ENCODE measurements at regions of chr14 and their contacts with region 1.

Region 1: GRCh38 chr14:106129274-106129673 is 602.9 kb downstream of the TMEM121 start:
- DNase-seq: peak in 6 of 14 experiments; percentile 22 to 79 (median 48)
- ATAC-seq: no peak
- H3K4me3 ChIP-seq: no peak overlapping the region
- H3K4me3 Mint-ChIP-seq: no peak overlapping the region
- H3K27ac ChIP-seq: no peak overlapping the region
- H3K27ac Mint-ChIP-seq: no peak overlapping the region
- H3K4me1 ChIP-seq: peaks cover 20% of the 10 kb centered on the region
- H3K4me1 Mint-ChIP-seq: peaks cover 29% of the 10 kb centered on the region
- H3K27me3 ChIP-seq: no peaks in the 10 kb centered on the region
- H3K27me3 Mint-ChIP-seq: no peaks in the 10 kb centered on the region
- CTCF ChIP-seq: peak; percentile 29

Region 2: GRCh38 chr14:106141242-106142220 is 12.3 kb after region 1 on chr14:
- CTCF ChIA-PET with region 1: interaction called, 20 read pairs
- POLR2A ChIA-PET with region 1: no interaction called
- intact Hi-C with region 1: no loop called
- DNase-seq: peak in 11 of 14 experiments; percentile 16 to 76 (median 33)
- ATAC-seq: peak; percentile 34
- H3K4me3 ChIP-seq: no peak overlapping the region
- H3K4me3 Mint-ChIP-seq: no peak overlapping the region
- H3K27ac ChIP-seq: no peak overlapping the region
- H3K27ac Mint-ChIP-seq: peak overlapping the region; percentile 32
- H3K4me1 ChIP-seq: peaks cover 10% of the 10 kb centered on the region
- H3K4me1 Mint-ChIP-seq: peaks cover 16% of the 10 kb centered on the region
- H3K27me3 ChIP-seq: peaks cover 0 to under 1% of the 10 kb centered on the region in 2 experiments
- H3K27me3 Mint-ChIP-seq: no peaks in the 10 kb centered on the region
- CTCF ChIP-seq: no peak

Region 3: DNA sequence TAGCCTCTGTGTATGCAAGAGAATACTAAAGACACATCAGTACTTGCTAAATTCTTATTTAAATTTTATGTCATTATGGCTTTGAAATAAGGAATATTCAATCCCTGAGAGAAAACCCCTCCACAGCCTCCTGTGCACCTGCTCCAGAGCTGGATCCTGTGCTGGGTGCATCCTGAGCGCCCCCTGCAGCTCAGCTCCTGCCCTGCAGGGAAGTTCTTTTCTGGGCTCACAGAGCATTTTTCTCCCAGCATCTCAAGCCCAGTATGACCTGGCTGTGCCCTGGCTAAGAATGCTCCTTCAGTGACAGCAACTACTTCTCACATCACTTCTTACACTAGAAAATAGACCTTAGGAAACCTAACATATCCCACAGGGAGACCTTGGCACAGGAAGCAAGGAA is 608.8 kb after region 1 on chr14:
- CTCF ChIA-PET with region 1: no interaction called
- POLR2A ChIA-PET with region 1: no interaction called
- intact Hi-C with region 1: no loop called
- DNase-seq: peak in 5 of 14 experiments; percentile 36 to 70 (median 40)
- ATAC-seq: no peak
- H3K4me3 ChIP-seq: no peak overlapping the region
- H3K4me3 Mint-ChIP-seq: no peak overlapping the region
- H3K27ac ChIP-seq: no peak overlapping the region
- H3K27ac Mint-ChIP-seq: no peak overlapping the region
- H3K4me1 ChIP-seq: peaks cover 35% of the 10 kb centered on the region
- H3K4me1 Mint-ChIP-seq: peaks cover 17% of the 10 kb centered on the region
- H3K27me3 ChIP-seq: no peaks in the 10 kb centered on the region
- H3K27me3 Mint-ChIP-seq: no peaks in the 10 kb centered on the region
- CTCF ChIP-seq: no peak

Measured in CD4-positive, alpha-beta T cell (primary cell).